Naive thymus-derived CD4-positive, alpha-beta T cell (primary cell): ENCODE measurements at regions of chr2 and their contacts with region 1.

Region 1: GRCh38 chr2:136171221-136171620 is 53.3 kb upstream of the CXCR4 start:
- DNase-seq: no peak
- ATAC-seq: no peak
- H3K4me3 ChIP-seq: no peak overlapping the region
- H3K4me3 Mint-ChIP-seq: peak overlapping the region in 2 of 10 donors; percentile 3 to 23
- H3K27ac ChIP-seq: no peak overlapping the region
- H3K27ac Mint-ChIP-seq: peak overlapping the region in 3 of 9 donors; percentile 17 to 70 (median 18)
- H3K4me1 ChIP-seq: peaks cover 0 to 9% of the 10 kb centered on the region in 2 donors
- H3K4me1 Mint-ChIP-seq: peaks cover 6 to 52% (median 30%) of the 10 kb centered on the region in 7 donors
- H3K27me3 ChIP-seq: no peaks in the 10 kb centered on the region
- H3K27me3 Mint-ChIP-seq: peaks cover 0 to 12% (median 0%) of the 10 kb centered on the region in 5 donors

Region 2: GRCh38 chr2:136156411-136156810 is 14.8 kb before region 1 on chr2:
- CTCF ChIA-PET with region 1: no interaction called
- POLR2A ChIA-PET with region 1: interaction called, 4 read pairs
- intact Hi-C with region 1: loop called in 1 of 2 experiments (anchors 2 kb)
- DNase-seq: no peak
- ATAC-seq: no peak
- H3K4me3 ChIP-seq: no peak overlapping the region
- H3K4me3 Mint-ChIP-seq: no peak overlapping the region
- H3K27ac ChIP-seq: no peak overlapping the region
- H3K27ac Mint-ChIP-seq: no peak overlapping the region
- H3K4me1 ChIP-seq: no peaks in the 10 kb centered on the region
- H3K4me1 Mint-ChIP-seq: peaks cover 5 to 24% (median 17%) of the 10 kb centered on the region in 7 donors
- H3K27me3 ChIP-seq: no peaks in the 10 kb centered on the region
- H3K27me3 Mint-ChIP-seq: peaks cover 0 to 22% (median 0%) of the 10 kb centered on the region in 5 donors